Activated CD8-positive, alpha-beta T cell treated with anti-CD3 and anti-CD28 coated beads for 36 hours (primary cell): ENCODE measurements at regions of chr12 and their contacts with region 1.

Region 1: DNA sequence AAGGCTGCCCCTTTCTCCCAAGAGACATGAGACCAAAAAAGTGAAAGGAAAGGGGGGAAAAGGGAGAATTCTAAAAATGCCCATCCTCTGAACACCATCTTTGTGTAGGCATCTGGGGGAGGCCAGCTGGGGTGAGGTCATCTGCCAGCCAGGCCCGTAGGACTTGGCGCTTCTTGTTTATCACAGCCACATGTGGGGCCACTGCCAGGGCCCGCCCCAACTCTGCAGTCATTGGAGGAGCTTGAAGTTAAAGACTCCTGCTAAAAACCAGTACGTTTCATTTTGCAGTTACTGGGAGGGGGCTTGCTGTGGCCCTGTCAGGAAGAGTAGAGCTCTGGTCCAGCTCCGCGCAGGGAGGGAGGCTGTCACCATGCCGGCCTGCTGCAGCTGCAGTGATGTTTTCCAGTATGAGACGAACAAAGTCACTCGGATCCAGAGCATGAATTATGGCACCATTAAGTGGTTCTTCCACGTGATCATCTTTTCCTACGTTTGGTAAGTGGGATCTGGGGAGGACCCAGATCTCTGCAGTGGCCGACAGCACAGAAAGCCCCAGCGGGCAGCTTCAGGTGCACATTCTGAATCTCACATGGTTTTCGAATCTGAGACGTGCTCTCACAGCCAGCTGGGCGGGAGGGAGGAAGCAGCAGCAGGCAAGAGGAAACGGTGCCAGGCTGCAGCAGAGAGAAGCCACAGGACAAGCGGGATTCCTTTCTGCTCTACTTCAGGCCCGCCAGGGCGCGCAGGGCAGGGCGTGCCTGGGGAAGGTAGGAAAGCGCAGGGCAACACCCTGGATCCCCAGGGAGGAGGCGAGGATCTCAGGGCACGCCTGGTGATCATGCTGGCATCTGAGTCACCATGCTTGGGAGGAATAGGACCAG is at the start of gene P2RX7:
- DNase-seq: peak; percentile 73
- ATAC-seq: peak; percentile 32
- H3K4me3 Mint-ChIP-seq: peak within 1 kb of the TSS; percentile 79
- H3K27ac Mint-ChIP-seq: peak within 1 kb of the TSS; percentile 78
- H3K4me1 Mint-ChIP-seq: peaks cover 58% of the 10 kb centered on the region
- H3K27me3 Mint-ChIP-seq: no peaks in the 10 kb centered on the region
- CTCF ChIP-seq: no peak
- total RNA-seq, gene P2RX7: 3.6 to 4.7 TPM

Region 2: DNA sequence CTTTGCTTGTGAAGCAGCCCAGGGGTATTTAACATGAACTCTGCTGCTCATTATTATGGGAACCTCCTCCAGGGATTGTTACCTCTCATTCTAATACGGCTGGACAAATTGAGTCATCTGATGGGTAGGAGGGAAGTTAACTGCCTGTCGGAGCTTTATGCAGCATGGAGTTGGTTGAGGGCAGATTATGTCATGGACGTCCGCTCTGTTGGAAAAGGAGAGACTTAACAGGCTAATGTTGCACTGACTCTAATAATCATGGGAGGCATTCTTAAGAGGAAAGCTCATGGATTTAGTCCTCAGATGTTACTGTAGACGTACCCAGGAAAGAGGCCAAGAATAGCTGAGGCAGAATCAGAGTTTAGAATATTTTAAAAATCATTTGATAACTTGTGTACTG is 561.5 kb before region 1 on chr12:
- CTCF ChIA-PET with region 1: no interaction called
- POLR2A ChIA-PET with region 1: no interaction called
- intact Hi-C with region 1: no loop called
- DNase-seq: no peak
- ATAC-seq: no peak
- H3K4me3 Mint-ChIP-seq: no peak overlapping the region
- H3K27ac Mint-ChIP-seq: no peak overlapping the region
- H3K4me1 Mint-ChIP-seq: no peaks in the 10 kb centered on the region
- H3K27me3 Mint-ChIP-seq: no peaks in the 10 kb centered on the region
- CTCF ChIP-seq: no peak

Region 3: DNA sequence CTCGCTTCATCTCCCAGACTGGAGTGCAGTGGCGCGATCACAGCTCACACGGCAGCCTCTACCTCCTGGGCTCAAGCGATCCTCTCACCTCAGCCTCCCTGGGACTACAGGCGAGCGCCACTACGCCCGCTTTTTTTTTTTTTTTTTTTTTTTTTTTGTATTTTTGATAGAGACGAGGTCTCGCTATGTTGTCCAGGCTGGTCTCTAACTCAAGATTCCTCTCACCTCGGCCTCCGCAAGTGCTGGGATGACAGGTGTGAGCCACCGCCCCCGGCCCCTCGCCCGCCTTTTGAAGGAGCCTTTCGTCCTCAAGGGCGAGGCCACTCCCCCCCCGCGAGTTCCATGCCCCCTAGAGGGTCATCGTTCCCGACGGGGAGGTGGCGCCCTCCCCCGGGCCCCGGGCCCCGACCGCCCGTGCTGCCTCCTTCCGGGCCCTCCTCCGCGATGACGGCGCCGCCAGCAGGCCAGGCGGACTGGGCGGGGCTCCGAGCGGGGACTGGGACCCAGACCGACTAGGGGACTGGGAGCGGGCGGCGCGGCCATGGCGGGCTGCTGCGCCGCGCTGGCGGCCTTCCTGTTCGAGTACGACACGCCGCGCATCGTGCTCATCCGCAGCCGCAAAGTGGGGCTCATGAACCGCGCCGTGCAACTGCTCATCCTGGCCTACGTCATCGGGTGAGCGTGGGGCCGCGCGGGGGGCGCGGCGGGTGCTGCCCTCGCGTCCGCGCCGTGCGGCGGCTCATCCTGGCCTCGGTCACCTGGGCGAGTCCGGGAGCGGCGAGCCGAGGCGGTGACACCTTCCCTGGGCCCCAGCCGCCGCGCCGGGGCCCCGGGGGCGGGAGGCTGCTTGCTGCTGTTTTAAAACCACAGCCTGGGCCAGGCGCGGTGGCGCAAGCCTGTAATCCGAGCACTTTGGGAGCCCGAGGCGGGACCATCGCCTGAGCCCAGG is 77.1 kb after region 1 on chr12 and contains the start of gene P2RX4:
- CTCF ChIA-PET with region 1: no interaction called
- POLR2A ChIA-PET with region 1: no interaction called
- intact Hi-C with region 1: loop called (anchors 5 kb)
- DNase-seq: peak; percentile 87
- ATAC-seq: peak; percentile 84
- H3K4me3 Mint-ChIP-seq: peak within 1 kb of the TSS; percentile 74
- H3K27ac Mint-ChIP-seq: peak within 1 kb of the TSS; percentile 85
- H3K4me1 Mint-ChIP-seq: peaks cover 32% of the 10 kb centered on the region
- H3K27me3 Mint-ChIP-seq: no peaks in the 10 kb centered on the region
- CTCF ChIP-seq: peak; percentile 32
- total RNA-seq, gene P2RX4: 12.2 to 15.1 TPM